ENCODE measurements at regions of chr16 and their contacts with region 1.

Region 1: DNA sequence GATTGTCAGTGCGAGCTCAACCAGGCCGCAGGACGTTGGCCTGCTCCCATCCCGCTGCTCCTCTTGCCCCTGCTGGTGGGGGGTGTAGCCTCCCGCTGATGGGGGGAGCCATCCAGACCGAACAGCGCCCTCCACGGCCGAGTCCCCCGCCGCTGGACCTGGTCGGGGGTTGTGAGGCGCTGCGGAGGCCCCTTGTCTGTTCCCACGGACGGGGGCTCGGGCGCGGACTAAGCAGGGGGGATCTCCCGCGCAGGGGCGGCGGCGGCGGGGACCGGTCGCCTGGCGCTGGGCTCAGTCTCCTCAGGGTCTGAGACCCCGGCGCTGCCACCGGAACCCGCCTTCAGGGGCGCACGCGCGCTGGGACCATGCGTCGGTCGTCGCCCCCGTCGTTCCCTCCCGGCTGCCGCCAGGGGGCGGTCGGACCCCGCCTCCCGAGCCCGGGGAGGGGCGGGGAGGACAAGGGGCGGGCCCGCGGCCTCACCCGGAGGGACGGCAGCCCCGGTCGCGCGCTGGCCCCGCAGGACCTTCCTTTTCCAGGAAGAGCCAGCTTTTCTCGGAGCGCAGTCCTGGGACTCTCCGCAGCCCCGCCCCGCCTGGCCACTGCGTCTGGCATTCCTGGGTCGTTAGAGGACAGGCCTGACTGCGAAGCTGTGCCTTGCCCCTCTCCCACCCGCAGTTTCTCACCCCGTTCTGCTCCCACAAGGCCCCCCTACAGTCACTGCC is 6.3 kb upstream of the IL32 start:
- DNase-seq: peak; percentile 88
- H3K4me3 Mint-ChIP-seq: peak overlapping the region; percentile 90
- H3K27ac Mint-ChIP-seq: peak overlapping the region; percentile 93
- H3K4me1 Mint-ChIP-seq: peaks cover 59% of the 10 kb centered on the region
- H3K27me3 Mint-ChIP-seq: peaks cover 2% of the 10 kb centered on the region

Region 2: DNA sequence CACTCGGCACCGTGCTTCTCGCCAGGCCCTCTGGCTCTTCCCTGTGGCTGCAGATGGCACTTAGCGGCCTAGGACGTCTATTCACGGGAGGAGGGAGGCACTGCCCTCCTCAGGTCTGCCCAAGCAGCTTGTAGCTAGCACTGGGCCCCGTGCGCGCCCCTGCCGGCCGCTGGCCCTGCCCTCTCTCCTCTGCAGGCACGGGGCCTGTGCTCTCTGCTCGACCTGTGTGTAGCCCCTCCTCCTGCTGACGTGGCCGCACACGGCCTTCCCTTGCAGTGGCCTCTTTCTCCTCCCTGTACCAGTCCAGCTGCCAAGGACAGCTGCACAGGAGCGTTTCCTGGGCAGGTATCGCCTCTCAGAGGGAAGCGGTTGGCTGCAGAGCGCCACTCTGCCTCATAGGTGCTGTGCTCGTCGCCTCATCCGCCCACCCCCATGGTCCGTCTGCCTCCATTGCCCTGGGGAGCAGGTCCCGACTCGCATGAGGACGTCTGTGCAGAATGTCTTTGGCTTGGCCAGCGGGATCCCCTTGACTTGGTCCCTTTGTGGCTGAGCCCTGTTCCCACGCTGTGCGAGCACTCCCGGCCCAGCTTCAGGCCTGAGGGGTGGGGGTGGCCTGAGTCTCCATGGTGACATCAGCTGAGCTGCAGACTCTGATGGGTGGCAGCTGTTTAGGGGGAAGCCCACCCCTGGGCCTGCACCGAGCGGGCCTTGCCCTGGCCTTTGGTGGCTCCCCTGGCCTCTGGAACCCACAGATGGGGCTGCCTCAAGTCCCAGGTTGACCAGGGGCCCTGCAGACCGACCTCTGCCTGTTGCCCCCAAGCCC is 976.8 kb before region 1 on chr16:
- intact Hi-C with region 1: no loop called
- DNase-seq: no peak
- H3K4me3 Mint-ChIP-seq: no peak overlapping the region
- H3K27ac Mint-ChIP-seq: no peak overlapping the region
- H3K4me1 Mint-ChIP-seq: no peaks in the 10 kb centered on the region
- H3K27me3 Mint-ChIP-seq: no peaks in the 10 kb centered on the region

Region 3: DNA sequence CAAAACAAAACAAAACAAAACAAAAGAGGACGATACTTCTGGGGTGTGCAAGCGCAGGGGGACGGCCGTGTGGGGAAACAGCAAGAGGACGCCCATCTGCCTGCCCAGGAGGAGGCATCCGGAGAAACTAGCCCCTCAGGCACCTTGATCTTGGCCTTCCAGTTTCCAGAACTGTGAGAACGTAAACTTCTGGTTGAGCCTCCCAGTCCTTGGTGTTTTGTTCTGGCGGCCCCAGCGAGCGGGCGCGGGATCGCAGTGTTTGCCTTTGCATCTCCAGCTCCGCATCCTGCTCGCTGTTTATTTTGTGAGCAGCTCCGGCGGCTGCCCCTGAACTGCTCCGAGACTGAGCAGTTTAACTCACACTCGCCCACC is 13.8 kb before region 1 on chr16:
- intact Hi-C with region 1: loop called (anchors 1 kb)
- DNase-seq: no peak
- H3K4me3 Mint-ChIP-seq: peak overlapping the region; percentile 83
- H3K27ac Mint-ChIP-seq: peak overlapping the region; percentile 77
- H3K4me1 Mint-ChIP-seq: peaks cover 21% of the 10 kb centered on the region
- H3K27me3 Mint-ChIP-seq: peaks cover 18% of the 10 kb centered on the region

Region 4: DNA sequence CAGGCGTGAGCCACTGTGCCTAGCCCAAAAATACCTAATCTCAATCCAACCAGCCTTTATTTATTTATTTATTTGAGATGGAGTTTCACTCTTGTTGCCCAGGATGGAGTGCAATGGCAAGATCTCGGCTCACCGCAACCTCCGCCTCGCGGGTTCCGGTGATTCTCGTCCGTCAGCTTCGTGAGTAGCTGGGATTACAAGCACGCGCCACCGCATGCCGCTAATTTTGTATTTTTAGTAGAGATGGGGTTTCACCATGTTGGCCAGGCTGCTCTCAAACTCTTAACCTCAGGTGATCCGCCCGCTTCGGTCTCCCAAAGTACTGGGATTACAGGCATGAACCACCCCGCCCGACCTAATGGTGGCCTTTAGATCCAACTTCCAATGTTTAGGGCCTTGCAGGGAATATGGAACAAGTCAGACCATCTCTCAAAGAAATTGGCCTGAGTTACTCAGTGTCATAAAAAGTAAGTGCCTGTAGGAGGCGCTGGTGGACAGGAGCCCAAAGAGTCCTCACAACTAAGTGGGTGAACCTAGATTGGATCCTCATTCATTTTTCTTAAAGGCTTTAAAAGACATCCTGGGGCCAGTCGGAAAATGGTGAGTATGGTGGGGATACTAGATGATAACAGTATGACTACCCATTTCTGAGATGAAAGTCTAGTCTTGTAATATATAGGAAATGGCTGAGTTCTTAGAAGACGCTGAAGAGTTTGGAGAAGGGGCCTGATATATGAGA is 35.3 kb after region 1 on chr16:
- intact Hi-C with region 1: loop called (anchors 1 kb)
- DNase-seq: no peak
- H3K4me3 Mint-ChIP-seq: peak overlapping the region; percentile 1
- H3K27ac Mint-ChIP-seq: peak overlapping the region; percentile 67
- H3K4me1 Mint-ChIP-seq: peaks cover 25% of the 10 kb centered on the region
- H3K27me3 Mint-ChIP-seq: no peaks in the 10 kb centered on the region

Region 5: GRCh38 chr16:3106205-3106928 is 47.2 kb after region 1 on chr16:
- intact Hi-C with region 1: loop called (anchors 1 kb)
- DNase-seq: peak; percentile 88
- H3K4me3 Mint-ChIP-seq: peak overlapping the region; percentile 85
- H3K27ac Mint-ChIP-seq: peak overlapping the region; percentile 95
- H3K4me1 Mint-ChIP-seq: peaks cover 22% of the 10 kb centered on the region
- H3K27me3 Mint-ChIP-seq: no peaks in the 10 kb centered on the region

Region 6: DNA sequence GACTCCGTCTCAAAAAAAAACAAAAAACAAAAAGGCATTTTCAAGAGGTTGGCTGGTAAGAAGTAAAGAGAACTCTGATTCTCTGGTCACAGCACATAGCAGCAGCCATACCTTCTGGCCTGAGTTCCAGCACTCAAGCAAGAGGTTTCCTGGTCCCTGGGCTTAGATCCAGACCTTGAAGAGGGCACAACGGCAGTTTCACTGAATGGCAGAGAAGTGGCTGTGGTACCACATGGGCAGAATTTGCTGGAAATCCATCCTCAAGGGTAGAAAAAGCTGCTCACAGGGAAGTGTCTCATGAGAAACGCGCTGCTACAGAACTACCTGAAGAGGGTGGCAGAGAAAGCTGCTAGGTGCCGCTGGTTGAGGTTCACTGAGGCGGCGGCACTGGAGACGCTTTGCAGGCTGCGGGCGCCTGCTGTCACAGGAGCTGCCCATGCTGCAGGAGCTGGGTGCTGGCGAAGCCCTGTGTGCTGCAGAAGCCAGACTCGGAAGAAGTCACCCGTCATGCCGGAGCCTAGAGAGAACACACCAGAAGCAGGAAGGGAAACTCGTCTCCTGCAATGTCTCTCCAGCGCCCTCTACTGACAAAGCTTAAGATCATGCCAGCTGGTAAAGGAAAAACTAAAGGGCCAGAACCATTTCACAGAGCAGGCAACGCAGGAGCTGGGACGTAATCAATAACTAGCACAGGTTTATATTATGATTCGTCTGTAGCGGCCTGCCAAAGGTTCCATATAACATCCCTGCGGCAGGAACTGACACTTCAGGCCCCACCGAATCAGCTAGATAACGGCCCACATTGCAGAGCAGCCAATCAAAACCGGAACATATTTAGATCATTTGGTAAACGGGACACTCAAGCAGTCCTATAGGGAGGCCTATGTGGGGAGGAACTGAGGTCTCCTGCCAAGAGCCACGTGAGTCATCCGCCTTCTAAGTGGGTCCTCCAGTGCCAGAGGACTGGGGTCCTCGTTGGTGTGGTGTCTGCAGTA is 70.3 kb after region 1 on chr16:
- intact Hi-C with region 1: loop called (anchors 1 kb)
- DNase-seq: peak; percentile 81
- H3K4me3 Mint-ChIP-seq: peak overlapping the region; percentile 88
- H3K27ac Mint-ChIP-seq: peak overlapping the region; percentile 81
- H3K4me1 Mint-ChIP-seq: peaks cover 51% of the 10 kb centered on the region
- H3K27me3 Mint-ChIP-seq: no peaks in the 10 kb centered on the region

Region 7: GRCh38 chr16:3158471-3159314 is 99.5 kb after region 1 on chr16:
- intact Hi-C with region 1: no loop called
- DNase-seq: peak; percentile 85
- H3K4me3 Mint-ChIP-seq: peak overlapping the region; percentile 89
- H3K27ac Mint-ChIP-seq: peak overlapping the region; percentile 94
- H3K4me1 Mint-ChIP-seq: peaks cover 40% of the 10 kb centered on the region
- H3K27me3 Mint-ChIP-seq: peaks cover 15% of the 10 kb centered on the region

Region 8: GRCh38 chr16:3485821-3486505 is 426.8 kb after region 1 on chr16:
- intact Hi-C with region 1: no loop called
- DNase-seq: no peak
- H3K4me3 Mint-ChIP-seq: no peak overlapping the region
- H3K27ac Mint-ChIP-seq: no peak overlapping the region
- H3K4me1 Mint-ChIP-seq: no peaks in the 10 kb centered on the region
- H3K27me3 Mint-ChIP-seq: no peaks in the 10 kb centered on the region

Measured in activated T-helper 1 cell treated with anti-CD3 and anti-CD28 coated beads, Interleukin-12 subunit alpha, Interleukin-12 subunit beta, Interleukin-2, Interleukin-4 antibody, amounts not matched to agents 30 ng/mL and 10 ng/mL and 1 ng/mL, durations not matched to agents 14 hours and 24 hours and 36 hours (primary cell).